ENCODE measurements at regions of chr2 and their contacts with region 1.

Region 1: DNA sequence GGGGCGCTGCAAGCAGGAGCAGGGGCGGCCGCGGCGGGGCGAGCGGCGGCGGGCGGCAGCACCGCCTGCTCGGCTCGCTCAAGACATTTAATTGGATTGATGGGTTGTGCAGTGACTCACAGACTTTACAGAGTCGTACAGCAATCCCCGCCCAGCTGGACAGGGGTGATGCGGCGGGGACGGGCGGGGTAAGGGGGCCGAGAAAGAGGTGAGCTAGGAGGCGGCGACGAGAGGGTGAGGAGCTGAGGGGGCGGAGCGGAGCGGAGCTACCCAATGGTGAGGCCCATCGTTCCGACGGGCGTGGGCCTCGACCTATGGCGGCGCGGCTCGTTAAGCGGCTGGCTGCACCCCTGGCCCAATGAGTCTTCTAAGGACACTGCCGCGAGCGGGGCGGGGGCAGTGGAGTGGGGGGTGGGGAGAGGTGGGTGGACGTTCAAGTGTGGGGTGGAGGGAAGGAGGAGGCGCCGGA is 97.1 kb upstream of the SERTAD2 start:
- DNase-seq: peak; percentile 100
- H3K4me3 ChIP-seq: peak overlapping the region; percentile 77 to 88 (median 80)
- H3K27ac ChIP-seq: peak overlapping the region; percentile 96 to 99 (median 98)
- H3K4me1 ChIP-seq: peaks cover 12 to 35% (median 27%) of the 10 kb centered on the region in 4 donors
- H3K27me3 ChIP-seq: no peaks in the 10 kb centered on the region
- CTCF ChIP-seq: peak in 1 of 3 experiments; percentile 16
- EP300 ChIP-seq: no peak
- POLR2A ChIP-seq: peak; percentile 96

Region 2: GRCh38 chr2:64779117-64779690 is 28.4 kb after region 1 on chr2:
- intact Hi-C with region 1: no loop called
- DNase-seq: no peak
- H3K4me3 ChIP-seq: no peak overlapping the region
- H3K27ac ChIP-seq: no peak overlapping the region
- H3K4me1 ChIP-seq: peaks cover 8 to 14% (median 11%) of the 10 kb centered on the region in 4 donors
- H3K27me3 ChIP-seq: no peaks in the 10 kb centered on the region
- CTCF ChIP-seq: no peak
- EP300 ChIP-seq: no peak
- POLR2A ChIP-seq: no peak

Region 3: DNA sequence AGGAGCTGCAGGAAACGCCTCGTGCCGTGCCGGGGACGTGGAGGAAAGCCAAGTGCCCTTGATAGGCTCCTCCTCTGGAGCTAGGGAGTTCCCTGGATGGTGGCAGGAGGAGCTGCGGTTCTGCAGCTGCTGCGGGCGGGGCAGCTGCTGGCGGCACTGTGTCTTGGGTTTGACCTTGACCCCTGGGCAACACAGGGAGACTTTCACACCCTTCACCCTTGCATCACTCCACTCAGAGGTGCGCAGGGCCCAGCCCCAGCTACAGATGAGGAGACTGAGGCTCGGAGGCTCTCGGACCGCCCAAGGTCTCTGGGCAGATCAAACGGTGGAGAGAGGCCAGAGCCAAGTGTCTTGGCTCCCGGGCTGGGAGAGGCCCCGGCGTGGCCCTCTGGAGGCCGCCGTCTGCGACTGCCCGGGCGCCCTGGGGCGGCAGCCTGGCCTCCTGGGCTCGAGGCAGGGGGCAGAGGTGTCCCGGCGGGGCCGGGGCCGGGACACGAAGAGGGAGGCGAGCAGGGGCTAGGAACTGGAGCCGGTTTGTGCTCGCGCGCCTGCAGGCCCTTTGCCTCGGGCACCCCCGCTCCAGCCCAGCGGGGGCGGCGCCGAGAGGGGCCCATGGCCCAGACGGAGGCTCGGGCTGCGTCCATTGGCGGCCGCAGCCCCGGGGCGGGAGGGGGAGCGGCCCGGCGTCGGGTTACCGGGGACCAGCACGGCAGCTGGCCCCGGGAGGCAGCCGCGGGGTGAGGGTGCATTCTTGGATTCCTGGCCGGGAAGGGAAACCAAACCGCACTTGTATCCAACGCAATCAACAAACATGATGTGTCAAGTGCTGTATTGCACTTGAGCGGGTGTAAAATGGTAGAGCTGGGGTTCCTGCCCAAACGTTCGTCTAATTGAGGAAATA is 108.7 kb after region 1 on chr2:
- intact Hi-C with region 1: loop called (anchors 5 kb)
- DNase-seq: peak; percentile 95
- H3K4me3 ChIP-seq: peak overlapping the region; percentile 58 to 61 (median 59)
- H3K27ac ChIP-seq: peak overlapping the region; percentile 94 to 96 (median 95)
- H3K4me1 ChIP-seq: peaks cover 30 to 55% (median 50%) of the 10 kb centered on the region in 4 donors
- H3K27me3 ChIP-seq: no peaks in the 10 kb centered on the region
- CTCF ChIP-seq: peak in 1 of 3 experiments; percentile 4
- EP300 ChIP-seq: no peak
- POLR2A ChIP-seq: no peak

Region 4: GRCh38 chr2:64899081-64899865 is 148.4 kb after region 1 on chr2:
- intact Hi-C with region 1: no loop called
- DNase-seq: no peak
- H3K4me3 ChIP-seq: no peak overlapping the region
- H3K27ac ChIP-seq: no peak overlapping the region
- H3K4me1 ChIP-seq: no peaks in the 10 kb centered on the region
- H3K27me3 ChIP-seq: no peaks in the 10 kb centered on the region
- CTCF ChIP-seq: no peak
- EP300 ChIP-seq: no peak
- POLR2A ChIP-seq: no peak